WTC11 (cell line): ENCODE measurements at regions of chr20 and their contacts with region 1.

Region 1: GRCh38 chr20:38790200-38791053 is 15.1 kb upstream of the PPP1R16B start:
- DNase-seq: peak; percentile 67
- ATAC-seq: peak; percentile 92
- H3K4me3 Mint-ChIP-seq: no peak overlapping the region
- H3K27ac Mint-ChIP-seq: no peak overlapping the region
- H3K4me1 Mint-ChIP-seq: no peaks in the 10 kb centered on the region
- H3K27me3 Mint-ChIP-seq: peaks cover 5% of the 10 kb centered on the region; the same call in 1 of the 2 replicates
- CTCF ChIP-seq: peak; percentile 65

Region 2: DNA sequence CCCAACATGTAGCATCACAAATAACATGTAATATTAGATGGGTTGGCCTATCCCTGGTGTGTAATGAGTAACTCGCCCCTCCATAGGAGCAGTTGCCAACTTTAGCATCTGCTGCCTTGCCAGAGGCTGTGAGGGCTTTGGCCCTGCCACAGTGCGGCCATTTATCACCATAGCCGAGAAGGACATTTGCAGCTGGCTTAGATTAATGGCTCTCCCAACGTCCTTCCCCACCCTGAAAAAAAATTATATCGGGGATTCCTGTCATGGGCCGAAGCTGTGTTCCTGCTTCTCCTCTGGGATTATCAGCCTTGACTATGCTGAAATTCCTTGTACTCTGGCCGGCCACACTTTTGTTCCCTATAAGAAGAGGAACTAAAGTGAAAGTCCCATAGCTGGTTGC is 217.0 kb before region 1 on chr20:
- CTCF ChIA-PET with region 1: no interaction called
- POLR2A ChIA-PET with region 1: no interaction called
- DNase-seq: no peak
- ATAC-seq: no peak
- H3K4me3 Mint-ChIP-seq: no peak overlapping the region
- H3K27ac Mint-ChIP-seq: no peak overlapping the region
- H3K4me1 Mint-ChIP-seq: peaks cover 9% of the 10 kb centered on the region
- H3K27me3 Mint-ChIP-seq: no peaks in the 10 kb centered on the region
- CTCF ChIP-seq: no peak

Region 3: DNA sequence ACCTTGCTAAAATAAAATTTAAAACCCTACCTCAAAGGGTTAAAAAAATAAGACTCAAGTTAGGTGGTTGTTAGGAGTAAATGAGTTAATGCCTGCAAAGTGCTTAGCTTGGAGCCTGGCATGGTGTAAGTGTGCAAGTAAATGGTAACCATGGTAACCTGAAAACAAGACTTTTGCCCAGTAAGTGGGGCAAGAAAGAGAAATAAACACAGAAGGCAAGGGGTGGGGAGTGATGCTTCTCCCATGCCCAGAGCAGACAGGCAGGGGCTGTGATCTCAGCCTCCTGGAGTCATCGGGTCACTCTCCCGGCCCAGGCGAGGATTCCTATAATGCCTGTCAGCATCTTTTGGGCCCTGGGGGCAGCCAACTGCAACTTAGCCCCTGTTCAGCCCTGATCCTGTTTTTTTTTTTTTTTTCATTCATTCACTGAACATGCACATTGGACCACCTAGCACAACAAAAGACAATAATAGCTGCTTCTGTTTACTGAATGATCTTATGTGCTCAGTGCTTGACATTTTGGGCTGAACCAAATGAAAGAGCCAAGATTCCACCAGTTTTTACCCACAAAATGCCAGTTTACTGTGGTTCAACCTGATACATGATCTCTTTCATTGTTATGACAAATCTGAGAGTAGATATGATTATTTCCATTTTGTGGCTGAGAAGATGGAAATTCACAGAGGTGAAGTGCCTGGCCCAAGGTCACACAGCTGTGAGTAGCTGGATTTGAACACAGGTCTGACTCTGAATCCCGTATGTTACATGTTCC is 125.1 kb before region 1 on chr20:
- CTCF ChIA-PET with region 1: no interaction called
- POLR2A ChIA-PET with region 1: no interaction called
- DNase-seq: no peak
- ATAC-seq: no peak
- H3K4me3 Mint-ChIP-seq: no peak overlapping the region
- H3K27ac Mint-ChIP-seq: no peak overlapping the region
- H3K4me1 Mint-ChIP-seq: peaks cover 10% of the 10 kb centered on the region
- H3K27me3 Mint-ChIP-seq: peaks cover 42% of the 10 kb centered on the region
- CTCF ChIP-seq: no peak

Region 4: DNA sequence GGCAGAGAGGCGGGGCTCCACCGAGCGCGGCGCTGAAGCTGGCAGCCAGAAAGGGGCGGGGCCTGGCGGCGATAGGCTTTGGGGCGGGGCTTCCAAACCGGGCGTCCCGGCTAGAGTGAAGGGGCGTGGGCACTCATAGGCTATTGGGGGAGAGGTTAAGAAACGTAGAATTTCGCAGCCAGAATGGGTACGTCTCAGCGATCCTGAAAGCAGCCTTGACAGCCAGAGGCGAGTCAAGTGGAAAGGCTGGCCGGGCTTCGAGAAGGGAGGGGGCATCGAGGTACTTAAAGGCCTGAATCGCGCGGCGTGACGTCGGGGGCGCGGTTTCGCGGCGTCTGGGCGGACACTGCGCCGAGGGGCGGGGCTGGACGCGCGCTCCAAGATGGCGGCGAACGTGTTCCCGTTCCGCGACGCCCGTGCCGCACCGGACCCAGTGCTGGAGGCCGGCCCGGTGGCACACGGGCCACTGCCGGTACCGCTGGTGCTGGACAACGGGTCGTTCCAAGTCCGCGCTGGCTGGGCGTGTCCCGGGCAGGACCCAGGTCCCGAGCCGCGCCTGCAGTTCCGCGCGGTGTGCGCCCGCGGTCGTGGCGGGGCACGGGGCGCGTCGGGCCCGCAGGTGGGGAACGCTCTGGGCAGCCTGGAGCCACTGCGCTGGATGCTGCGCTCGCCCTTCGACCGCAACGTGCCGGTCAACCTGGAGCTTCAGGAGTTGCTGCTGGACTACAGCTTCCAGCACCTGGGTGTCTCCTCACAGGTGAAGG is 42.1 kb before region 1 on chr20 and contains the start of gene ACTR5:
- CTCF ChIA-PET with region 1: interaction called, 10 read pairs
- POLR2A ChIA-PET with region 1: no interaction called
- DNase-seq: peak; percentile 97
- ATAC-seq: peak; percentile 94
- H3K4me3 Mint-ChIP-seq: peak within 1 kb of the TSS; percentile 96
- H3K27ac Mint-ChIP-seq: peak within 1 kb of the TSS; percentile 99
- H3K4me1 Mint-ChIP-seq: peaks cover 20% of the 10 kb centered on the region
- H3K27me3 Mint-ChIP-seq: peaks cover 32% of the 10 kb centered on the region
- CTCF ChIP-seq: no peak
- total RNA-seq, gene ACTR5: 9.8 to 12.0 TPM (median 11.5 TPM) in 3 replicates

Region 5: GRCh38 chr20:38779247-38780097 is 11.0 kb before region 1 on chr20:
- CTCF ChIA-PET with region 1: interaction called, 15 read pairs
- POLR2A ChIA-PET with region 1: interaction called, 3 read pairs
- DNase-seq: peak; percentile 45
- ATAC-seq: peak; percentile 85
- H3K4me3 Mint-ChIP-seq: peak overlapping the region; percentile 60
- H3K27ac Mint-ChIP-seq: peak overlapping the region; percentile 100
- H3K4me1 Mint-ChIP-seq: peaks cover 34% of the 10 kb centered on the region
- H3K27me3 Mint-ChIP-seq: no peaks in the 10 kb centered on the region
- CTCF ChIP-seq: no peak